ENCODE measurements at regions of chr6 and their contacts with region 1.

Region 1: DNA sequence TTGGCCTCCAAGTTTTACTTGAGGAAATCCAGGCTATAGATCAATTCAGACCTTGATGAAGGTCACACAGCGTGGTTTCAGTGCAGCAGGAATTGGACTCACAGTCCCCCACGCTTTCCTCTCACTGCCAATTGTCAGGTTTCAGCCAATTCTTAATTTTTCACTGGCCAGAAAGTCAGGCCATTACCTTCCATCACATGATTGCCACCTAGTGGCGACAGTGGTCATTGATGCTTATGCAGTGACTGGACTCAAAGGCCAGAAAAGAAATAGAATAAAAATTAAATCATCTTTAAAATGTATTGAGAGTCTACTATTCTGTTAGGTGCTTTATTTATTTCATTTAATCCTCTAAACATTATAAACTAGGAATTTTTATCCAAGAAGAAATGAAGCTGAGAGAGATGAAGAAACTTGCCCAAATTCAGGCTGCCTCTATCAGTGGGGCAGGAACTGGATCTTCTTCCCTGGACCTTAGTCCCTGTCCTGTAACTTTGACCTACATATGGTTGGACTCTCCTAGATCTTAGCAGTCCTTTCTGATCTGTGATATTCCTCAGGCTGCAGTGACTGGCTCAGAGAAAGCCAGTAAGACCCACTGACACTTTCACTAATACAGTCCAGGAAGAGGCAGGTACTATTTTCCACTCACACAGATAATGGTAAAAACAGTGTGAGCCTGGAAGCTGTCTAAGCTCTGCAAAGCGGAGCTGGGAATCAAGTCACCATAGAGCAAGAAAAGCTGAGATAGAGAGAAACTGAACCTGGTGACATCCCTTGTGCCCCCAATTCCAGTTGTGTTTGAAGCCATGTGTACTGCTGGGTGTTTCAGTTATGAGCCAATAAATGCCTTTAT is 133.3 kb downstream of the ELOVL4 start:
- DNase-seq: peak; percentile 84
- H3K4me3 Mint-ChIP-seq: no peak overlapping the region
- H3K27ac Mint-ChIP-seq: no peak overlapping the region
- H3K4me1 Mint-ChIP-seq: no peaks in the 10 kb centered on the region
- H3K27me3 Mint-ChIP-seq: no peaks in the 10 kb centered on the region

Region 2: DNA sequence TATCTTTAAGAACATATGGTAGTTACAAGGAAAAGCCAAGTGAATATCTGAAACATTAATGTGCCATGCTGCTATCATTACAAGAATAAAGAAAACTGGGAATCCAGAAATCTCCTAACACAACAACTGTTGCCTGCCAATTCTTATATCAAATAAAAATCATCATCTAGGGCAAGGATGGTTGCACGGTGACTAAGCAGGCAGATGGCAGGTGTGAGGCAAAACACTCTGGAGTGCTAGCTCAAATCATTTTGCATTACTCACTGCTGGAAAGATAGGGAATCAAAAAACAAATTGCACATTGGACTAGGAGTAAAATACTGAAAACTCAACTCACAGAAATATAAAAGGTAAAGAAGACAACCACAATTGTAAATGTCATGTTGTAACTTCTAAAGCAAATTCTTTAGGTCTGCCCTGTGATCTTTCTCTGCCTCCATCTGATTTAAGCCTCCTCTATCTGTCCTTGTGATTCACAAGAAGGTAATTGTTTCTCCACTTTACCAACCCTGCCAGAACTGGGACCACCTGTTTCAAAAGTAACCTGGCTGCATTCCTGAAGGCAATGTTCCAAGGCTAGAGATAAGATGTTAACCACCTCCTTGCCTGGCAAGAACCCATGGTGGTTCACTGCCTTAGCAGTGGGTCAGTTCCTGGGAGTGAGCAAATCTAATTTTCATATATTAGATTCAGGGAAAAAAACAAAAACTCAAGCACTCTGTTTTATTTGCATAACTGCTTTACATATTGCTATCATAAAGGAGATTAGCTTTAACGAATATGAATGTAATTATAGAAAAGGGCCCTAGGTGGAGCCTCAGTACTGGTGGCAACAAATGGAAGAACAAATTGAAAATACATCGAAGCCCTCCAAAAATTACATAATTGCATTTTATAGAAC is 243.7 kb before region 1 on chr6:
- CTCF ChIA-PET with region 1: interaction called, 3 read pairs
- intact Hi-C with region 1: loop called (anchors 1 kb)
- DNase-seq: no peak
- H3K4me3 Mint-ChIP-seq: no peak overlapping the region
- H3K27ac Mint-ChIP-seq: no peak overlapping the region
- H3K4me1 Mint-ChIP-seq: no peaks in the 10 kb centered on the region
- H3K27me3 Mint-ChIP-seq: no peaks in the 10 kb centered on the region

Region 3: DNA sequence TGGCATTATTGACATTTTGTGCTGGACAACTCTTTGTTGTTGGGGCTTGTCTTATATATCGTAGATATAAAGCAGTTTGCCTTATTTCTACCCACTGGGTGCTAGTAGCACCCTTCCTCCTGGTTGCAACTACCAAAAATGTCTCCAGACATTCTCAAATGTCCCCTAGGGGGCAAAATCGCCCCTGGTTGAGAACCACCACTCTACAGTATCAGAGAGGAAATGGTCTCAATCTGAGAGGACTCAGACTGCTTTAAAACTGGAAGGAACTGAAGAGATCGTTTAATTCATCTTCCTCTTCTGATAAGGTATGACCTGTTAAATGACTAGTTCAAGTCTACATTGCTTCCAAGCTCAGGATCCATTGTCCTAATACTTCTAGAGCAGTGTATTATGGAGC is 168.1 kb before region 1 on chr6:
- CTCF ChIA-PET with region 1: no interaction called
- intact Hi-C with region 1: loop called (anchors 1 kb)
- DNase-seq: peak; percentile 23
- H3K4me3 Mint-ChIP-seq: no peak overlapping the region
- H3K27ac Mint-ChIP-seq: no peak overlapping the region
- H3K4me1 Mint-ChIP-seq: peaks cover 8% of the 10 kb centered on the region
- H3K27me3 Mint-ChIP-seq: peaks cover 13% of the 10 kb centered on the region